Activated T-helper 1 cell treated with anti-CD3 and anti-CD28 coated beads, Interleukin-12 subunit alpha, Interleukin-12 subunit beta, Interleukin-2, Interleukin-4 antibody, amounts not matched to agents 30 ng/mL and 10 ng/mL and 1 ng/mL, durations not matched to agents 14 hours and 24 hours and 36 hours (primary cell): ENCODE measurements at regions of chr7 and their contacts with region 1.

Region 1: DNA sequence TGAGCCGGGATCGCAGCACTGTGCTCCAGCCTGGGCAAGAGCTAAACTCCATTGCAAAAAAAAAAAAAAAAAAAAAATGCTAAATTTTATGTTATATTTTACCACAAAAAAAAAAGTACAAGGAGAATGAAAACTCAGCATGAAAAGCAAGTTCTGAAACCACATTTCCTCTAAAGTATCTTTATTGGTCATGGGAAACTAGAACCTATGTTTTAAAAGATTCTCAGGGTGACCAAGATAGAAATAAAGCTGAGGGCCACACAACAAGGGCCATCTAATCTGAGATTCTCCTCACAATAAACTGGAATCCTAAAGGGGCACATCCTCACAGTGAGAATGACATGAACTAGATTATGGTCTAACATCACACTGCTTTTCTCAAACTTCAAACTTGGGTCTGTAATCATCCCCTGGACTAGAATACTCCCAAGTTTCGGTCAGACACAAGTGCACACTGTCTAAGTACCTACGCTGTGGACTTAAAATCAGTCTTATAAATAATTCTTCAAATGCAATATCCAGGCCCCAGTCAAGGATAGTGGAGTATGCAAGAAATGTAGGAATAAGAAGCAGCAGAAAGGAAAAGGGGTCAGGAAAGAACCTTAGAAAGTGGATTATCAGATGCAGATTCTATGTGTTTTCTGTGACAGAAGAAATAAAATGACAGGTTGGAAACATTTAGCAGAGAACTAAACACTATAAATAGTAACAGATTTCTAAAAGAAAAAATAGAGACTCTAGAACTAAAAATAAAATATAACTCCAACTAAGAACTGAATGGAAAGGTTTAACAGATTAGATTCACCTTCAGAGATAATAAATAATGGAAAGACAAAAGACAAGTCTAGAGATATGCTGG is 49.9 kb downstream of the COA1 start:
- DNase-seq: no peak
- H3K4me3 Mint-ChIP-seq: no peak overlapping the region
- H3K27ac Mint-ChIP-seq: peak overlapping the region; percentile 15
- H3K4me1 Mint-ChIP-seq: peaks cover 50% of the 10 kb centered on the region
- H3K27me3 Mint-ChIP-seq: no peaks in the 10 kb centered on the region

Region 2: DNA sequence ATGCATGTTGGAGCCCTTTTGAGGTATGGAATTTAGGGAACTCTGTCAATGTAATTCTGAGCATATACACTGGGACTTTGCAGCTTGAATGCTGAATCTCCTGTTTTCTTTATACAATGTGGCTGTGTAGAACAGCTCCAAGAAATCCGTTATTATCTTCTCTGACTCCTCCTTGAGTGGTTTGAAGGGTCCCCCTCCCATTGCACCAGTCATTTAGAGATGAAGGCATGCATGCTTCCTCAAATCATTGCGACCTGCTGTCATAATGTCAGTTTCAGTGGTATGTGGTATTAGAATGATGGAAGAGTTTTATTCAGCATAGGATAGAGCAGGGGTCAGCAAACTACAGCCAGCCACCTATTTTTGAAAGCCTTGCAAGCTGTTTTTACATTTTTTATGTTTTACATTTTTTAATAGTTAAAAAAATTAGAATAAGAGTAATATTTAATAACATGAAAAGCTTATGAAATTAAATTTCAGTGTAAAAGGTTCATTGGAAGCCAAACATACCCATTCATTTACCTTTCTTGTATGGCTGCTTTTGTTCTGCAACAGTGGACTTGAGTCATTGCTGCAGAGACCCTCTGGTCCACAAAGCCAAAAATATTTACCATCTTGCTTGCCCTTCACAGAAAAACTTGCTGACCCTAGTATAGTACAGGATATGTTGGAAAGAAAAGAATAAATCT is 88.4 kb before region 1 on chr7:
- intact Hi-C with region 1: loop called (anchors 2 kb)
- DNase-seq: peak; percentile 33
- H3K4me3 Mint-ChIP-seq: peak overlapping the region; percentile 46
- H3K27ac Mint-ChIP-seq: peak overlapping the region; percentile 70
- H3K4me1 Mint-ChIP-seq: peaks cover 85% of the 10 kb centered on the region
- H3K27me3 Mint-ChIP-seq: no peaks in the 10 kb centered on the region

Region 3: DNA sequence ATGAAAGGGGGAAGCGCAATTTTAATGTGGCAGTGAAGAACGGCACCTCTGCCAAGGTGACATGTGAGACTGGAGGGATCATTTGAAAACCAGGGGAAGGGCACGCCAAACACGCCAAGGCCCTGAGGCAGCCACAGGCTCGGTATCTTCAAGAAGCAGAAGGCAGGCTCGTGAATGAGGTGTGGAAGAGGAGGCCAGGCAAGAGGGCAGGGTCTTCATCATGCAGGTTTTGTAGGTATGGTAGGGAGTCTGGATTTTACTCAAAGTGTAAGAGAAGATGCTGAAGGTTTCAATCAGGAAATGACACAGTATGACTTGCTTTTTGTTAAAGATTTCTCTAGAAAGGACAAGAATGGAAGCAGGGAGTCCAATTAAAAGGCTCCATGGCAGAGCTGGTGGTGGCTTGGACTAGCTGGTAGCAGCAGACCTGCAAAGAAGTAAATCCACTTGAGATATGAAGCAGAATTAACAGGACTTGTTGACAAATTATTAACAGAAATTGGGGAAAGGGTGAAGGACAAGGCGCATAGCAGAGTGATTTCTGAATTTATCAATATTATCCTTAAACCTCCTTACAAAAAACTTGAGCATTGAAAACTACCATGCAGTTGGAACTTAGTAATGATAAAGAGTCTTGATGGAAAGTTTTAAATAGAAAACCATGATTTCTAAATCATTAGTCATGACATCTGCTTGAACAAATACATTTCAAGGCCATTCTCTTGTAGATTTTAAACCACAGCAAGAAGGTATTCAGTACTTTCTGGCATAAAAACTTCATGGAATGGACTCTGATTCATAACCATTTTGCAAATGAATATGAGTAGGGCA is 20.5 kb before region 1 on chr7:
- intact Hi-C with region 1: loop called (anchors 1 kb)
- DNase-seq: no peak
- H3K4me3 Mint-ChIP-seq: peak overlapping the region; percentile 66
- H3K27ac Mint-ChIP-seq: peak overlapping the region; percentile 95
- H3K4me1 Mint-ChIP-seq: peaks cover 49% of the 10 kb centered on the region
- H3K27me3 Mint-ChIP-seq: no peaks in the 10 kb centered on the region

Region 4: DNA sequence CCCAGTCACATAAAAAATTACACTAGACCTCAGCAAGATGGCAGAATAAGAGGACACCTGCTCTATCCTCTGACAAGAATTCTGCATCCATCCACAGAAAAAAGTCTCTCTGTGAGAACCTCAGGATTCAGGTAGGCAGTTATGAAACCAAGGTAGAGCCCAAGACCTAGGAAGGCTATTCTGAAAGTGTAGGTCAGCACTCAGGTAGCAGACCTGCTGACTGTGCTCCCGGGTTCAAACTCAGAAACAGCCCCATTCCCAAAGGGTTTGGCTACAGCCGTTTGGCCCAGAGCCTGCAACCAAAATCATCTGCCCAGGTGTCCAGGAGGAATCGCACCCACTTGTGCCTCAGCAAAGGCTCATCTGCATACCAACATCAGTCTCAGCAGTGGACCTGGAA is 12.2 kb after region 1 on chr7:
- intact Hi-C with region 1: loop called (anchors 1 kb)
- DNase-seq: no peak
- H3K4me3 Mint-ChIP-seq: no peak overlapping the region
- H3K27ac Mint-ChIP-seq: no peak overlapping the region
- H3K4me1 Mint-ChIP-seq: peaks cover 32% of the 10 kb centered on the region
- H3K27me3 Mint-ChIP-seq: no peaks in the 10 kb centered on the region

Region 5: GRCh38 chr7:43700059-43700501 is 20.6 kb after region 1 on chr7:
- intact Hi-C with region 1: loop called (anchors 2 kb)
- DNase-seq: no peak
- H3K4me3 Mint-ChIP-seq: no peak overlapping the region
- H3K27ac Mint-ChIP-seq: no peak overlapping the region
- H3K4me1 Mint-ChIP-seq: peaks cover 65% of the 10 kb centered on the region
- H3K27me3 Mint-ChIP-seq: no peaks in the 10 kb centered on the region

Region 6: DNA sequence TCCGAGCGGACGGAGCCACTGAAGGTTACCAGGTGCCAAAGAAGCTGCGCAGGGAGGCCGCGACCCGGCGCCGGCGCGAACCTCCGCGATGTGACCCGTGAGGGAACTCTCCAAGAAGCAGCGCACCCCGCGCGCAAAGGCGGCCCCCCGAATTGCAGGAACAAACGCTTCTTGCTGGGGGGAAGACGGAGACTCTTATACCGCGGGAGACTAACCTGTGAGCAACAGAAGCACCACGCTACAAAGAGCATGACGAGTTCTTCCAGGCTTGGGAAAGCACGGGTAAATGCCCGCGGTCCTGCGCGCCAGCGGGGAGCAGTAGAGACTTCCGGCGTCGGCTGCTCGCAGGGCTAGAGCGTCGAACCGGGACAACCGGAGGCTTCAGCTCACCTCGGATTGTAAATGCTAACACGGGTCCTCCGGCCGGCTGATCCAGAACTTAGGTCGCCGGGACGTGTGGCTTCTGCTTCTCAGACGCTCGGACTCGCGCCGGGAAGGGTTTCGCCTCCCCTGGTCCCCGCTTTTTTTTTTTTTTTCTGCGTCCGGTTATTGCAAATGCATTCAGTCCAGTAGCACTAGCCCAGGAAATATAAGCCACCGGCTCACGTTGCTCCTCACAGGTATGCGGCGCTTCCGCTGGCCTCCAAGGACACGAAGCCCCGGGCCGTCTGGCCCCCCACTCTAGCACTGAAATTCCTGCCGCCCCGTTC is 49.9 kb after region 1 on chr7 and contains the start of gene COA1:
- intact Hi-C with region 1: no loop called
- DNase-seq: peak; percentile 76
- H3K4me3 Mint-ChIP-seq: peak within 1 kb of the TSS; percentile 88
- H3K27ac Mint-ChIP-seq: peak within 1 kb of the TSS; percentile 76
- H3K4me1 Mint-ChIP-seq: peaks cover 28% of the 10 kb centered on the region
- H3K27me3 Mint-ChIP-seq: peaks cover 3% of the 10 kb centered on the region
- total RNA-seq, gene COA1: 81.7 and 88.6 TPM in 2 replicates